ENCODE measurements at regions of chr9 and their contacts with region 1.

Region 1: GRCh38 chr9:6827439-6827838 is 69.7 kb downstream of the KDM4C start:
- H3K4me3 ChIP-seq: no peak overlapping the region
- H3K27ac ChIP-seq: no peak overlapping the region
- H3K4me1 ChIP-seq: 0 out of 2 replicates have a peak, but pooled peaks cover 2% of the 10 kb centered on the region
- CTCF ChIP-seq: no peak

Region 2: GRCh38 chr9:6785682-6786081 is 41.8 kb before region 1 on chr9:
- CTCF ChIA-PET with region 1: interaction called, 10 read pairs
- POLR2A ChIA-PET with region 1: no interaction called
- H3K4me3 ChIP-seq: no peak overlapping the region
- H3K27ac ChIP-seq: no peak overlapping the region
- H3K4me1 ChIP-seq: no peaks in the 10 kb centered on the region; the same call in 1 of the 2 replicates
- CTCF ChIP-seq: no peak

Region 3: DNA sequence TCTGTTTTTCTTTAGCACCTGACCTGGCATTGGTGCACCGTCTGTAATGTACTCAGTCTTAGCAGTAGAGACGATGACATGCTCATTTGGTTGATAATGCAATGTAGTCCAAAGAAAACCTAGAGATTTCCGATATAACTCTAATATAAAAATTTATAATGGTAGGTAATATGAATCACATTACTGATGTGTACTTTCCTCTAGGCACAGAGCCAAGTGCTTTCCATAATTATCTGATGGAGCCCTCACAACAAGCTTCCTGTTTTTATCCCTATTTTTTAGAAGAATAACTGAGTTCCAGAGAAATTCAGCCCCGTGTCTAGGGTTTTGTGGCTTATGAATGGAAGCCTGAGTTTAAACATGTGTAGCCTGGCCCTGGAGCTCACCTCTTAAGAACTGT is 16.0 kb before region 1 on chr9:
- CTCF ChIA-PET with region 1: interaction called, 27 read pairs
- POLR2A ChIA-PET with region 1: no interaction called
- H3K4me3 ChIP-seq: no peak overlapping the region
- H3K27ac ChIP-seq: no peak overlapping the region
- H3K4me1 ChIP-seq: no peaks in the 10 kb centered on the region
- CTCF ChIP-seq: no peak

Region 4: GRCh38 chr9:6838158-6838557 is 10.7 kb after region 1 on chr9:
- CTCF ChIA-PET with region 1: interaction called, 17 read pairs
- POLR2A ChIA-PET with region 1: no interaction called
- H3K4me3 ChIP-seq: no peak overlapping the region
- H3K27ac ChIP-seq: no peak overlapping the region
- H3K4me1 ChIP-seq: no peaks in the 10 kb centered on the region
- CTCF ChIP-seq: no peak

Region 5: GRCh38 chr9:6845880-6846279 is 18.4 kb after region 1 on chr9:
- CTCF ChIA-PET with region 1: interaction called, 12 read pairs
- POLR2A ChIA-PET with region 1: no interaction called
- H3K4me3 ChIP-seq: no peak overlapping the region
- H3K27ac ChIP-seq: no peak overlapping the region
- H3K4me1 ChIP-seq: no peaks in the 10 kb centered on the region
- CTCF ChIP-seq: 0 out of 2 replicates have a peak, but pooled peaks have one; percentile 23

Region 6: DNA sequence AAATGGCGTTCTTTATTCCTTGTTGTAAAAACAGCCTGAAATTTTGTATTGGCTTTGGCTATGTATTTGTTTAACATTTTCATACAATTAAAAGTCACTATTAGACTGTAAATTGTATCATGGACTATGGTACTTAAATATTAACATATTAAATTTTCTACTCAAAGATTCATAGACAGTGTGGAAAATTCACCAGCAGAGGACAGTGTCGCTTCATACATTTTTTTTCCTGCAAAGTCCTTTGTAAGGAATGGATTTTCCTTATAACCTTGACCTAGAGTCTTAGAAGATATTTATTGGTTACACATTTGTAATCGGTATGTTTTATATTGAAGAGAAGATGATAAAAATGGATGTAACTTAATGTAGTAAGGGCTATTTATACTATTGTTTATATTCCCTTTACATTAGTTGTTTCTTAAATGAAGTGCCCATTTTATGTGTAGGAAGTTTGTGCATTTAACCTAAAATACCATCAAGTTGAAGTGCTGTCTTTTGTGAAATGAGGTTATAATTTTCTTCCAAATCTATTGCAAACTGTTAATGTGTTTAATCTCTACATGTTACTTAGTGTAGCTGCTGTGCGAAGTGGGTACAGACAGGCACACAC is 80.4 kb after region 1 on chr9:
- CTCF ChIA-PET with region 1: interaction called, 22 read pairs
- POLR2A ChIA-PET with region 1: no interaction called
- H3K4me3 ChIP-seq: no peak overlapping the region
- H3K27ac ChIP-seq: no peak overlapping the region
- H3K4me1 ChIP-seq: no peaks in the 10 kb centered on the region
- CTCF ChIP-seq: 0 out of 2 replicates have a peak, but pooled peaks have one; percentile 18

Region 7: GRCh38 chr9:7055201-7055903 is 227.9 kb after region 1 on chr9:
- CTCF ChIA-PET with region 1: interaction called, 16 read pairs
- POLR2A ChIA-PET with region 1: no interaction called
- H3K4me3 ChIP-seq: no peak overlapping the region
- H3K27ac ChIP-seq: no peak overlapping the region
- H3K4me1 ChIP-seq: no peaks in the 10 kb centered on the region
- CTCF ChIP-seq: no peak

Measured in HEK293 (cell line).